AG04449 (cell line): ENCODE measurements at regions of chr3 and their contacts with region 1.

Region 1: GRCh38 chr3:194315088-194315964 is 35.8 kb downstream of the CPN2 start:
- DNase-seq: no peak
- H3K4me3 ChIP-seq: peak overlapping the region; percentile 61
- CTCF ChIP-seq: peak; percentile 98

Region 2: GRCh38 chr3:193665370-193665989 is 649.8 kb before region 1 on chr3:
- CTCF ChIA-PET with region 1: interaction called, 86 read pairs
- POLR2A ChIA-PET with region 1: no interaction called
- DNase-seq: no peak
- H3K4me3 ChIP-seq: no peak overlapping the region
- CTCF ChIP-seq: no peak

Region 3: DNA sequence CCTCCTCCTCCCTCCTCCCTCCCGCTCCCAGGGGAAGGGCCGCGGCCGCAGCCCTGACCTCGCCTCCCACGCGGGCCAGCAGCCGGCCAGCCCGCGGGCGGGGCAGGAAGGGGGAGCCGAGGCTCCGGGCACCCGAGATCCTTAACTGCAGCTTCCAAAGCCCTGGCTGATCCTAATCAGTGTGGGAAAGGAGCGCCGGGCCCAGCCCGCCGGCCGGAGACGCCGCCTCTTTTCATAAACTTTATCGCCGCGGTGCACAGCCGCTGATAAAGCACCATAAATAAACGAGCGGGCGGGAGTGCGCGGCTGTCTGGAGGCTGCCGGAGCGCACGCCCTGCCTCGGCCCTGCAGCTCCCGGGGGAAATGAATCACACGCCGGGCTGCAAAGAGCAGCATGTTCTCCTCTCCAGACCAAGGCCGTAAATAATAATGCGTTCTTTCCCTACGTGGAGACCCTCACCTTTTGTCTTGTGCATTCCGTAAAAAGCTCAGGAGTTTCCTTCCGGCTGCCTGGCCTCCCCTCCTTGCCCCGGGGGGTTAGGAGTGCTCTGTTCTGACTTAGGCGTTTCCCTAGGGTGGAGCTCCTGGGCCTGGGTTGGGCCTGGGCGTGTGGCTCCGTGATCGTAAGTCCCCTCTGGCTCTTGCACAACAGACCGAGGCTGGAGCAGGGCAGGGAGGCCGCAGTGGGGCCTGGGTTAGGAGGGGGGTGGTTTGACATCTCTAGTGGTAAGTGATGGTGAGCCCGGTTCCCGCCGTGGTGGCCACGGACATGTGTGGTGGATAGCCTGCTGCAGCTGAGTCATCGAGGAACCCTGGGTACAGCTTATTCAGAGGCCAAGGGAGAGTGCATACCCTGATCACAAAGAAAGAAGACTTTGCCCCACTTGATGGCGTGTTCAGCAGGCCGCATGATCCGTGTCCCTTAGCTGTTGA is 311.9 kb before region 1 on chr3:
- CTCF ChIA-PET with region 1: interaction called, 12 read pairs
- POLR2A ChIA-PET with region 1: no interaction called
- DNase-seq: peak; percentile 63
- H3K4me3 ChIP-seq: peak overlapping the region; percentile 48
- CTCF ChIP-seq: no peak

Region 4: GRCh38 chr3:194141415-194142155 is 173.7 kb before region 1 on chr3:
- CTCF ChIA-PET with region 1: interaction called, 32 read pairs
- POLR2A ChIA-PET with region 1: no interaction called
- DNase-seq: no peak
- H3K4me3 ChIP-seq: peak overlapping the region; percentile 44
- CTCF ChIP-seq: no peak

Region 5: GRCh38 chr3:194172871-194173270 is 142.5 kb before region 1 on chr3:
- CTCF ChIA-PET with region 1: no interaction called
- POLR2A ChIA-PET with region 1: no interaction called
- DNase-seq: no peak
- H3K4me3 ChIP-seq: no peak overlapping the region
- CTCF ChIP-seq: no peak

Region 6: DNA sequence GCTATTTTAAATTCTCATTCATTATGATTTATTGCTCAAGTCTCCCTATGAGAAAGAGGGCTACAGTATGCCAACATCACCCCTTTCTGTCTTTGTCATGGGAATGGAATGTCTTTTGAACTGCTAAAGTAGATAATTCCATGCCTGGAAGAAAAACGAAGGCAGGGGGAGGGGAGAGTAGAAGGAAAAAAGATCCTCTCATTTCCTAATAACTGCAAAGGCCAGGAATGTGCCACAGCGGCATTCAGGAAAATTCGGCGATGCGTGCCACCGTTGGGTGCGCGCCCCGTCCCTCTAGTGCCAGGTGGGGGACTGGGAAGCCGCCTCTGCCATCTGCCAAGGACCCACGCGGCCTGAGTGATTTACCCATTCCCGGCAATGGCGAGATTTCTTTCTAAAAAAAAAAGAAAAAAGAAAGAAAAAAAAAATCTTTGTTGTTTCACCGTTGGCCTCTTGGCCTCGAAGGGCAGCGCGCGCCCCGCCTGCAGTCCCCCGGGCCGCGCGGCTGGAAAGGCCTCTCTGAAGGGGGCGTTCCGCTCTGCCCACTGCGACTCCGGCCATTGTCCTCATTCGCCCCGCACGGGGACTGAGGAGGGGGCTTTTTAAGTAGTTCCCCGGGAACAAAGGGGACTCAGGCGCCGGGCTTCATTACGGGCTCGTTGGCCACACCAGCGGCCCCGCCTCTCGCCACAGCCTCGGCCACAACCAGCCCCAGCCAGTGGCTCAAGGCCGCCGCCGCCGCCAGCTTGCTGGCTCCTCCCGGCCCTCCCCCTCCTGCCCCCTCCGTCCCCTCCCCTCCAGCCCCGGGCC is 18.7 kb before region 1 on chr3:
- CTCF ChIA-PET with region 1: interaction called, 20 read pairs
- POLR2A ChIA-PET with region 1: no interaction called
- DNase-seq: no peak
- H3K4me3 ChIP-seq: no peak overlapping the region; the same call in 1 of the 2 replicates
- CTCF ChIP-seq: no peak

Region 7: GRCh38 chr3:194512895-194513601 is 197.7 kb after region 1 on chr3:
- CTCF ChIA-PET with region 1: no interaction called
- POLR2A ChIA-PET with region 1: no interaction called
- DNase-seq: no peak
- H3K4me3 ChIP-seq: no peak overlapping the region
- CTCF ChIP-seq: no peak